AG04450 (cell line): ENCODE measurements at regions of chr2 and their contacts with region 1.

Region 1: GRCh38 chr2:241950413-241951315 is 81.1 kb downstream of the RTP5 start:
- DNase-seq: peak; percentile 18
- H3K4me3 ChIP-seq: no peak overlapping the region
- H3K27ac ChIP-seq: no peak overlapping the region
- H3K27me3 ChIP-seq: peaks cover 10% of the 10 kb centered on the region
- CTCF ChIP-seq: peak; percentile 94

Region 2: GRCh38 chr2:241965931-241966412 is 15.3 kb after region 1 on chr2:
- CTCF ChIA-PET with region 1: interaction called, 14 read pairs
- POLR2A ChIA-PET with region 1: interaction called, 5 read pairs
- DNase-seq: peak; percentile 92
- H3K4me3 ChIP-seq: peak overlapping the region; percentile 48
- H3K27ac ChIP-seq: peak overlapping the region; percentile 89
- H3K27me3 ChIP-seq: peaks cover 6% of the 10 kb centered on the region
- CTCF ChIP-seq: no peak